BJ (cell line): ENCODE measurements at regions of chr4 and their contacts with region 1.

Region 1: GRCh38 chr4:4477391-4477790 is 64.5 kb downstream of the STX18 start:
- DNase-seq: no peak
- H3K4me3 ChIP-seq: no peak overlapping the region
- H3K27me3 ChIP-seq: no peaks in the 10 kb centered on the region
- CTCF ChIP-seq: no peak

Region 2: GRCh38 chr4:4281787-4282186 is 195.6 kb before region 1 on chr4:
- CTCF ChIA-PET with region 1: no interaction called
- POLR2A ChIA-PET with region 1: interaction called, 12 read pairs
- DNase-seq: no peak
- H3K4me3 ChIP-seq: no peak overlapping the region
- H3K27me3 ChIP-seq: no peaks in the 10 kb centered on the region
- CTCF ChIP-seq: no peak

Region 3: GRCh38 chr4:4488405-4489404 is 11.3 kb after region 1 on chr4:
- CTCF ChIA-PET with region 1: interaction called, 15 read pairs
- POLR2A ChIA-PET with region 1: no interaction called
- DNase-seq: peak; percentile 16
- H3K4me3 ChIP-seq: no peak overlapping the region
- H3K27me3 ChIP-seq: no peaks in the 10 kb centered on the region
- CTCF ChIP-seq: peak; percentile 91